Transverse colon (tissue), 4 donors: ENCODE measurements at regions of chr18 and their contacts with region 1.

Region 1: DNA sequence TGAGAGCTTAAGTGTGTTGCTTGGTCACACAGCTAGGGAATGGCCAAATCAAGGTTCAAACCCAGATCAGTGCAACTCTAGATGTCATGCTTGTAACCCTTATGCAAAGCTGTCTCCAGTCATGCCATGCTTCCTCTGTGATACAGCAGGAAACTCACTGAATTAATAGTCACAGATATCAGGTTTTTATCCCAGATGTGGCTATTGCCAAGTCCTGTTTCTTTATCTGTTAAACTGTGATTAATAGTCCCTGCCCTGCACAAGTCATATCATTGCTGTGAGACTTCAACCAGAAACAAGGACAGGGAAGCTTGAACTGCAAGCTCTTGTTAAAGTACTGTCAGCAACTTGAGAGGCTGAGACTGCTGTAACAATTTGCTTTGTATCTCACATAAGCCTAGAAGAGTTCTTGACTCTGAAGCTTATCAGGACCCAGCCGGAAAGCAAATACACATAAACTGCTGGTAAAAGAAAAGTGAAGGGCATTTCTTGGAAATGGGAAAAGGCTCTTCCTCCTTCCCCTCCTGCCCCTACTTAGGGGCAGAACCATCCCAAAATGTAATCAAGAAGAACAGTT is 609.0 kb downstream of the DCC start:
- DNase-seq: no peak
- H3K4me3 ChIP-seq: no peak overlapping the region
- H3K27ac ChIP-seq: no peak overlapping the region
- H3K4me1 ChIP-seq: no peaks in the 10 kb centered on the region
- H3K27me3 ChIP-seq: no peaks in the 10 kb centered on the region
- CTCF ChIP-seq: no peak
- EP300 ChIP-seq: no peak
- POLR2A ChIP-seq: no peak

Region 2: DNA sequence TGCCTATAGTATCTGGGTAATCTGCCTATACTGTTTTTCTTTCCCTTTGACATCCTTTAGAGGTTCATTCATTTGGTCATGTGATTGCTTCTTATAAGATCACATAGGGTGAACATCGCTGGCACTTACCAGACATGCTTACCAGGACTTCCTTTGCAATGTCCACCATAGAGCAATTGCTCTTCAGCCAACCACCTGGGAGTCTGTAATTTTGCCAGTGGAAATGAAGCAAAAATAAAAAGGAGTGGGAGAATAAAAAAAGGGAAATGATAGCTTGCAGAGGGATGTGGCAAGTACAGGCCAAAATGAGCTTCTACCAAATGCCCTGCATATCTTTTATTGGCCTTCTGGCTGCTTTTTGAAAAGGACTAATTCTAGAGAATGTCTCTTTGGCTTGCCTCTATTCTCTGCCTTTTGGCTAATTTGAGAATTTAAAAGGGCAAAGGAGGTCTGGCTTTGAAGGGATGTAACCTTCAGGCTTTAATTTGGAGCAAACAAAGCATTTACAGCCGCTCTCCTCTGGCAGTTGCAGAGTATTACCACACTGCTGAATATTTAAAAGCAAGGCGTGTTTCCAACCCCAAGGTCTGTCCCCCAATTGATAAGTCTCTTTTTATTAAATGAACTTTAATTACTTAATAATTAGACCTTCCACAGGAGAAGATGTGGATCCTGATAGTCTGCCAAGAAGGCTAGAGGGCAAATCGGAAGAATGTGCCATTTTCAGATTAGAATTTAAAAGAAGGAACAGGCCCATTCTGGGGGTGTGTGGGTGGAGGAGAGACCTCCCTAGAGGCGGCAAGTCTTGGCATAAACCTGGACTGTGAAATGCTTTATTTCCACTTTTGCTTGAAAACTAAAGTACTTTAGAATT is 51.1 kb before region 1 on chr18:
- in situ Hi-C with region 1: loop called in 1 of 4 experiments (anchors 10 kb)
- intact Hi-C with region 1: no loop called
- DNase-seq: no peak
- H3K4me3 ChIP-seq: no peak overlapping the region
- H3K27ac ChIP-seq: no peak overlapping the region
- H3K4me1 ChIP-seq: no peaks in the 10 kb centered on the region
- H3K27me3 ChIP-seq: no peaks in the 10 kb centered on the region
- CTCF ChIP-seq: no peak
- EP300 ChIP-seq: no peak
- POLR2A ChIP-seq: no peak

Region 3: GRCh38 chr18:52903857-52904256 is 45.1 kb before region 1 on chr18:
- in situ Hi-C with region 1: loop called in 1 of 4 experiments (anchors 10 kb)
- intact Hi-C with region 1: loop called (anchors 1 kb)
- DNase-seq: peak; percentile 69
- H3K4me3 ChIP-seq: no peak overlapping the region
- H3K27ac ChIP-seq: no peak overlapping the region
- H3K4me1 ChIP-seq: no peaks in the 10 kb centered on the region
- H3K27me3 ChIP-seq: no peaks in the 10 kb centered on the region
- CTCF ChIP-seq: peak; percentile 64 to 73 (median 70)
- EP300 ChIP-seq: no peak
- POLR2A ChIP-seq: no peak

Region 4: GRCh38 chr18:53040286-53040685 is 91.3 kb after region 1 on chr18:
- in situ Hi-C with region 1: no loop called
- intact Hi-C with region 1: no loop called
- DNase-seq: no peak
- H3K4me3 ChIP-seq: no peak overlapping the region
- H3K27ac ChIP-seq: no peak overlapping the region
- H3K4me1 ChIP-seq: no peaks in the 10 kb centered on the region
- H3K27me3 ChIP-seq: no peaks in the 10 kb centered on the region
- CTCF ChIP-seq: no peak
- EP300 ChIP-seq: no peak
- POLR2A ChIP-seq: no peak

Region 5: DNA sequence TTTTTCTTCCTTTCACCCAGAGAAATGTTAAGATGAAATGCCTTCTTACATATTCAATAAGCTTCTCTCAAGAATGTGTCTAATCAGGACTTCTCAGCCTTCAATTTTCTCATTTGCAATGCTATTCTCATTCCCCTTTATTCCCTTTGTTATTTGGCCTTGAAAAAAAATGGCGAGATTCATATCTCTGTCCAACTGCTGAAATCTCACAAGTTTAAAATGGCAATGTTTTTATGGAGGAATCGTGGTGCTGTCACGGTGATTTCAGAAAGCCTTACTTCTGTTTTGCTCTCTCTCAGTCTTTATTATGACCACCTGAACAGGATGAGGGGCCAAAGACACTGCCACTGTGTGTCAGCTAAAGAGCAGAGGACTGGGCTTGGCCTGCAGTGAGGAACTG is 319.5 kb after region 1 on chr18:
- in situ Hi-C with region 1: no loop called
- intact Hi-C with region 1: no loop called
- DNase-seq: no peak
- H3K4me3 ChIP-seq: no peak overlapping the region
- H3K27ac ChIP-seq: no peak overlapping the region
- H3K4me1 ChIP-seq: no peaks in the 10 kb centered on the region
- H3K27me3 ChIP-seq: no peaks in the 10 kb centered on the region
- CTCF ChIP-seq: no peak
- EP300 ChIP-seq: no peak
- POLR2A ChIP-seq: no peak